ENCODE measurements at regions of chr5 and their contacts with region 1.

Region 1: GRCh38 chr5:157172403-157172802 is 6.3 kb upstream of the GARIN3 start:
- DNase-seq: peak; percentile 44
- ATAC-seq: peak; percentile 96
- H3K4me3 Mint-ChIP-seq: peak overlapping the region; percentile 62
- H3K27ac Mint-ChIP-seq: peak overlapping the region; percentile 86
- H3K4me1 Mint-ChIP-seq: peaks cover 30% of the 10 kb centered on the region
- H3K27me3 Mint-ChIP-seq: no peaks in the 10 kb centered on the region
- CTCF ChIP-seq: no peak

Region 2: DNA sequence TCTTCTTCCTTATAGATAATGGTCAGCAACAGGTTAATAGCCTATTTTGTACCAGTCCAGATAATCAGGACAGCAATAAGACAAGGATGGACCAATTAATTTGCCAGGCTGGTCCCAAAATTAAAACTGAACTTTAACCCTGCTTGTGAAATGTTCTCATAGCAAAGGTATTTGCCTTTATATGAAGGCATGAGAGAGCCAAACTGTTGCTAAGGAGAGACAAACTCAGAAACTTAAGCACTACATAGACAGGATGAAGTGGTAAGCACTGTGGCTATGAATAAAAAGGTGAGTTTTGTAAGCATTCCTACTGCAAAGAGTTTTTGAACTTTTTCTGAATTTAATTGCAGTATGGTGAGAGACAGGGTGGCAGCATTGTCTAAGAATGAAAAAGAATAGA is 497.0 kb before region 1 on chr5:
- CTCF ChIA-PET with region 1: no interaction called
- POLR2A ChIA-PET with region 1: no interaction called
- intact Hi-C with region 1: no loop called
- DNase-seq: no peak
- ATAC-seq: no peak
- H3K4me3 Mint-ChIP-seq: no peak overlapping the region
- H3K27ac Mint-ChIP-seq: no peak overlapping the region
- H3K4me1 Mint-ChIP-seq: no peaks in the 10 kb centered on the region
- H3K27me3 Mint-ChIP-seq: no peaks in the 10 kb centered on the region
- CTCF ChIP-seq: no peak

Region 3: DNA sequence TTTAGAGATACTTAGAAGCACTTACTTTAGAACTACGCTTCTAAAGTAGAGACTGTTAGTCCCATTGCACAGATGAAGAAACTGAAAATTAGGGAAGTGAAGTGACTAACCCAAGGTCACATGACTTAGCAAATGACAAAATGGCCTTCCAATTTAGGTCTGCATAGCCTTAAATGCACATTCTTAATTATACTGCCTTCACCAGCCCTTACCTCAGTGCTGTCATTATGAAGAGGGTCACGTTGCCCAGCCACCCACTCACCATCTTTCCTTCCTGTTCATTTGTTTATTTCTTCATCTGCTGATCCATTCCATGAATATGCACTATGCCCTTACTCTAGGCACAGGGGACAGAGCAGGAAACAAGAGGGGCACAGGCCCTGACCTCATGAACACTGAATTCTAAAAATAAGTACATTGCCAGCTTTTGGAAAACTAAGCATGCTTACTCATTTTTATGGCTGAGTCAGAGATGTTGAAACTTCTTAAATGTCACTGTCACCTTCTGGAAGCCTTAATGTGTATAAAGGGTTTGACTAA is 72.2 kb before region 1 on chr5:
- CTCF ChIA-PET with region 1: no interaction called
- POLR2A ChIA-PET with region 1: no interaction called
- intact Hi-C with region 1: no loop called
- DNase-seq: no peak
- ATAC-seq: no peak
- H3K4me3 Mint-ChIP-seq: no peak overlapping the region
- H3K27ac Mint-ChIP-seq: no peak overlapping the region
- H3K4me1 Mint-ChIP-seq: peaks cover 3% of the 10 kb centered on the region
- H3K27me3 Mint-ChIP-seq: no peaks in the 10 kb centered on the region
- CTCF ChIP-seq: no peak

Region 4: GRCh38 chr5:157198277-157198986 is 26.0 kb after region 1 on chr5:
- CTCF ChIA-PET with region 1: no interaction called
- POLR2A ChIA-PET with region 1: no interaction called
- intact Hi-C with region 1: loop called (anchors 2 kb)
- DNase-seq: no peak
- ATAC-seq: no peak
- H3K4me3 Mint-ChIP-seq: no peak overlapping the region
- H3K27ac Mint-ChIP-seq: no peak overlapping the region
- H3K4me1 Mint-ChIP-seq: peaks cover 7% of the 10 kb centered on the region
- H3K27me3 Mint-ChIP-seq: no peaks in the 10 kb centered on the region
- CTCF ChIP-seq: no peak